HEK293T (cell line): ENCODE measurements at regions of chr14 and their contacts with region 1.

Region 1: DNA sequence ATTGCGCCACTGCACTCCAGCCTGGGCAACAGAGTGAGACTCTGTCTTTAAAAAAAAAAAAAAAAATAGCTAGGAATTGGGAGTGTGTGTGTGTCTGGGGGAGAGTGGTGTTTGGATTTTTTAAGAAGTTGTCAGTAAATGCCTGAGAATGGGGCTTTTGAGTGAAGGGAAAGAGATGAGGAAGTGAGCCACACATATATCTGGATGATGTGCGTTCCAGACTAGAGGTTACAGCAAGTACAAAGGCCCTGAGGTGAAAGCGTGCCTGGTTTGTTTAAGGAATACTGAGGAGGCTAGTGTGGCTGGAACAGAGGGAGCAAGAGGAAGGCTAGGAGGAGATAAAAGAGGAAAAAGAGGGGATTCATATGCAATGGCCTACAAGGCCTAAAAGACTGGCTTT is 70.0 kb downstream of the PAPLN start:
- DNase-seq: no peak

Region 2: GRCh38 chr14:73162251-73162650 is 145.0 kb before region 1 on chr14:
- CTCF ChIA-PET with region 1: no interaction called
- POLR2A ChIA-PET with region 1: no interaction called
- DNase-seq: no peak

Region 3: GRCh38 chr14:73295198-73295796 is 12.0 kb before region 1 on chr14:
- CTCF ChIA-PET with region 1: interaction called, 16 read pairs
- POLR2A ChIA-PET with region 1: no interaction called
- DNase-seq: peak; percentile 34